Activated CD4-positive, alpha-beta memory T cell treated with anti-CD3 and anti-CD28 coated beads for 36 hours (primary cell): ENCODE measurements at regions of chr19 and their contacts with region 1.

Region 1: GRCh38 chr19:36850559-36851442 is at the start of gene ZNF345:
- DNase-seq: peak; percentile 92
- H3K4me3 Mint-ChIP-seq: no peak within 1 kb of the TSS
- H3K27ac Mint-ChIP-seq: no peak within 1 kb of the TSS
- H3K4me1 Mint-ChIP-seq: peaks cover 12% of the 10 kb centered on the region
- H3K27me3 Mint-ChIP-seq: no peaks in the 10 kb centered on the region
- total RNA-seq, gene ZNF345: 3.8 to 4.2 TPM

Region 2: DNA sequence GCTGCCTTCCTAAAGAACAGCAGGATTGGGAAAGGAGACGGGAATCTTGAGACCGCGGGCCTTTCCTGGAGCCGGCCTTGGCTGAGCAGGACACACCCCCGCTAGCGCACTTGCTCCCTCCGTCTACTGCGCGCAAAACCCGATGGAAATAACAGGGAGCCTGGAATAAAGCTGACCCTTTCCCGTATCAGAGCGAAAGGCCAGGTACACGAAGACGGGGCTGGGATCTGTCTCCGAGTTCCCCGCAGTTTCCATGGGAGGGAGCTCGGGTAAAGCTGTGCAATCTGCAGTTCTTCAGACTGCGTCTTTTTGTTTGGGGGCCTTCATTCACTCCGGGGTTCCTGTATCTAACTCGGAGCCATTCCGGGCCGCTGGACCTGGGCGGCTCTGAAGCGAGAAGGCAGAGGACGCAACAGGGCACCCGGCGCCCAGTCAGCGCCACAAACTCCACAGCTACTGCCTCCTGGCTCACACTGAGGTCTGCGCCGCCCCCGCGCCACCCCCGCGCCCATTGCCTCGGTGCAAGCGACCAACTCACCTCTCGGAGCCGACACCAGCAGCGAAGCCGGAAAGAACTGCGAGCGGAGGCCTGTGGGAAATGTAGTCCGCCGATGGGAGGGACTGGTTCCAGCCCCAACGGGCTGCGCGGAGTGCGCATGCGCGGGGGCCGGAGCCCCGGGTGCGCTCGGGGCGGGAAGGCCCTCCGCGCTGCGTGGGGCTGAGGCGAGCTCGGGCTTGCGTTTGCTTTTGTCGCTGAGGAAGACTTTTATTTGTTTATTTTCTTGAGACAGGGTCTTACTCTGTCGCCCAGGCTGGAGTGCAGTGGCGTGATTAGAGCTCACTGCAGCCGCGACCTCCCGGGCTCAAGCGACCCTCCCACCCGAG is 471.9 kb before region 1 on chr19 and contains the start of gene ZFP14:
- CTCF ChIA-PET with region 1: no interaction called
- POLR2A ChIA-PET with region 1: no interaction called
- intact Hi-C with region 1: loop called (anchors 1 kb)
- DNase-seq: peak; percentile 97
- H3K4me3 Mint-ChIP-seq: peak within 1 kb of the TSS; percentile 91
- H3K27ac Mint-ChIP-seq: peak within 1 kb of the TSS; percentile 86
- H3K4me1 Mint-ChIP-seq: peaks cover 10% of the 10 kb centered on the region
- H3K27me3 Mint-ChIP-seq: no peaks in the 10 kb centered on the region
- total RNA-seq, gene ZFP14: 1.6 to 2.3 TPM

Region 3: DNA sequence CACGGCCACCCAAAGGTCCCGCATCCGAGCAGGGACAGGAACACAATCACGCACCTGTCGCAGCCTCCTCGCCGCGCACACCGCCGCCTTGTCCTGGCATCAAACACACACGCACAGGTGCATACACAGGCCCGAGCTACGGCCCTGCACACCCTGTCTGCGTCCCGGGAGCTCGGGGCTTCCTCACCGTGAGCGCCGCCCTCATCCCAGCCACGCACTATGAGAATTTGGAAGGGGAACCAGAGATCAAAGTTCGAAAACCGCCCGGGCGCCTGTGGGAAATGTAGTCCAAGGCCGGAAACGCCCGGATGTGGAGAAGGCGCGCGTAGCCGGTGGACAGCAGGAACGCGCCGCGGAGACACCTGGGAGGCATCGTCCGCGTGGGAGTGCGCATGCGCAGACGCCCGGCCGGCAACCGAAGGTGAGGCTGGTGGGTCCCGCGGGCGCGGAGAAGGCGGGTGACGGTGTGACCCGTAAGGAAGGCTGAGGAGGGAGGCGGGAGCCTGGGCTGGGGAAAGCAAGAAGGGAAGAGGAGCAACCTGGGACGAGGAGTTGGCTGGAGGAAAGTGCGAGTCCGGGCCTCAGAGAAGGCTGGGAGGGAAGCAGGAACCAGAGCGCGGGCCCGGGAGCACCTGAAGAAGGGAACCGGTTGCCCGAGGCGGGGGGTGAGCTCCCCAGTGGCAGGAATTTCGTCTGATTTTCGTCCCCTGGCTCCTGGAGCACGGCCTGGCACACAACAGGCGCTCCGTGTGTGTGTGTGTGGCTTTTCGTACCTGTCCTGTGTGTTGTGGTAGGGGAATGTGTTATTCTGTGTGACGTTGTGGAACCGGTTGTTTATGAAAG is 163.4 kb before region 1 on chr19 and contains the start of gene ZNF567:
- CTCF ChIA-PET with region 1: no interaction called
- POLR2A ChIA-PET with region 1: interaction called, 5 read pairs
- intact Hi-C with region 1: loop called (anchors 2 kb)
- DNase-seq: peak; percentile 99
- H3K4me3 Mint-ChIP-seq: peak within 1 kb of the TSS; percentile 99
- H3K27ac Mint-ChIP-seq: peak within 1 kb of the TSS; percentile 90
- H3K4me1 Mint-ChIP-seq: peaks cover 24% of the 10 kb centered on the region
- H3K27me3 Mint-ChIP-seq: no peaks in the 10 kb centered on the region
- total RNA-seq, gene ZNF567: 4.9 to 5.3 TPM

Region 4: GRCh38 chr19:36797786-36798108 is 53.1 kb before region 1 on chr19:
- CTCF ChIA-PET with region 1: no interaction called
- POLR2A ChIA-PET with region 1: interaction called, 5 read pairs
- intact Hi-C with region 1: loop called (anchors 1 kb)
- DNase-seq: no peak
- H3K4me3 Mint-ChIP-seq: peak overlapping the region; percentile 80
- H3K27ac Mint-ChIP-seq: peak overlapping the region; percentile 89
- H3K4me1 Mint-ChIP-seq: peaks cover 8% of the 10 kb centered on the region
- H3K27me3 Mint-ChIP-seq: no peaks in the 10 kb centered on the region

Region 5: GRCh38 chr19:36876993-36877938 is 26.5 kb after region 1 on chr19:
- CTCF ChIA-PET with region 1: no interaction called
- POLR2A ChIA-PET with region 1: no interaction called
- intact Hi-C with region 1: no loop called
- DNase-seq: no peak
- H3K4me3 Mint-ChIP-seq: no peak overlapping the region
- H3K27ac Mint-ChIP-seq: no peak overlapping the region
- H3K4me1 Mint-ChIP-seq: no peaks in the 10 kb centered on the region
- H3K27me3 Mint-ChIP-seq: no peaks in the 10 kb centered on the region

Region 6: GRCh38 chr19:37077934-37078725 is 227.3 kb after region 1 on chr19 and contains the start of gene ZNF420:
- CTCF ChIA-PET with region 1: no interaction called
- POLR2A ChIA-PET with region 1: no interaction called
- intact Hi-C with region 1: loop called (anchors 1 kb)
- DNase-seq: peak; percentile 93
- H3K4me3 Mint-ChIP-seq: peak within 1 kb of the TSS; percentile 94
- H3K27ac Mint-ChIP-seq: peak within 1 kb of the TSS; percentile 79
- H3K4me1 Mint-ChIP-seq: peaks cover 31% of the 10 kb centered on the region
- H3K27me3 Mint-ChIP-seq: no peaks in the 10 kb centered on the region
- total RNA-seq, gene ZNF420: 6.5 to 8.7 TPM